ENCODE measurements at regions of chr5 and their contacts with region 1.

Region 1: DNA sequence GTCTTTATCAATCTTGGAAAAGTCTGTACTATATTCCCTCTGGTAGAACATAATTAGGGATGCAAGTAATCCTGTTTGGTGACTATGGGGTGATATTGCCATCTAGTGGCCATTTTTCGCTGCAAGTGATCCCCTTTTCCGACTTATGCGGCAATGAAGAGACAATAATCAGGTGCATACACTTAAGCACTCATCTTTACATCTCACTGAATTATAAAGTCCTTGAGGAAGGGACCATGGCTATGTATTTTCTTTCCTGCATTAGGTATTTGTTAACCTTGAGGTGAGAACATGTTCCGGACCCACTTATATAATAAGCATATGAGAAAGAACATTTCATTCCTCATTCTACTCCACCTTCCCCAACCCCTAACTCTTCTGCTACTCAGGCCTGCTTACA is 19.6 kb upstream of the LIX1 start:
- DNase-seq: peak; percentile 20
- H3K4me3 Mint-ChIP-seq: no peak overlapping the region
- H3K27ac Mint-ChIP-seq: no peak overlapping the region
- H3K4me1 Mint-ChIP-seq: no peaks in the 10 kb centered on the region
- H3K27me3 Mint-ChIP-seq: peaks cover 2% of the 10 kb centered on the region

Region 2: GRCh38 chr5:96614110-96614691 is 547.8 kb before region 1 on chr5:
- intact Hi-C with region 1: loop called (anchors 1 kb)
- DNase-seq: peak; percentile 16
- H3K4me3 Mint-ChIP-seq: no peak overlapping the region
- H3K27ac Mint-ChIP-seq: no peak overlapping the region
- H3K4me1 Mint-ChIP-seq: peaks cover 6% of the 10 kb centered on the region
- H3K27me3 Mint-ChIP-seq: peaks cover 43% of the 10 kb centered on the region

Region 3: DNA sequence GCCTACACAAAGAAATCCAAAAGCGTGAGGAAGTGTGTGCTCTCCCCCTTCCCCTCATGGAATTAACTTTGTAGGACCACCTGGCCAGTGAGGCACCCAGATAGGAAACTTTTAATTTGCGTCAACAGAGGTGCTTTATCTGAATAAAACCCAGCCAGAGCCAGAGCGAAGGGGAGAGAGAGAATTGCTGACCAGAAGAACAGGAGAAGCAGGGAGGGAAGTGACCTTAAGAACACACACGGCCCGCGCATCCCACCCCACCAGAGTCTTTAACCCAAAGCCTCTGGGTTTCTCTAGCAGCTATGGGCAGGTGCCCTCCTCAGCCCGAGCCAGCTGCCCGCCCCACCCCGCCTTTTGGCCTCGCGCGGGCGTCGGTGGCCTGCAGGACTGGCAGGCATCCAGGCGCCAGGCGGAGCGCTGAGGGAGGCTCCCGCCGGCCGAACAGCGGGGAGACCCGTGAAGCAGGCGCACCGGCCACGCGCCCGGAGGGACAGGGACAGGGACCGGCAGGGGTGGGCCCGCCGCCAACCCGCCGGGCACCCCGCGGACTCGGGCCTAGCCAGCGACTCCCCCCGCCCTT is 354.9 kb before region 1 on chr5:
- intact Hi-C with region 1: loop called (anchors 1 kb)
- DNase-seq: no peak
- H3K4me3 Mint-ChIP-seq: peak overlapping the region; percentile 99
- H3K27ac Mint-ChIP-seq: peak overlapping the region; percentile 95
- H3K4me1 Mint-ChIP-seq: peaks cover 81% of the 10 kb centered on the region
- H3K27me3 Mint-ChIP-seq: no peaks in the 10 kb centered on the region

Region 4: DNA sequence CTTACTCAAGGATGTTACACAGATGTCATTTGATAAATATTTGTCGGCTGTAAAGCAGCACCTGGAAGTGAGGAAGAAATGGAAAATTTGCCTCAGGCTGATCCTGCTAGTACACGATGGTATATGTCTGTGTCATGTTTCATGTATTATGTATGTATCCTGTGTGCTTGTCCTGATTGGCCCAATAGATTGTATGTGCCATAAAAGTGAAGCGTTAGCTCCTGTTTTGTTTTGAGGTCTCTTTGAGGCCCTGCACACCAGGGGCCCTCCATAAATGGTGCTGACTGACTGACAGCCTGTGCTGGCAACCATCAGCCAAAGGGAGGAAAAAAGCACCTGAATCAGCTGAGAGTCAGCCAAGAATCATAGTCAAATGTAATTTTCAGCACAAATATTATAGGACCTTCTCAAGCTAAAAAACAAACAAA is 238.0 kb before region 1 on chr5:
- intact Hi-C with region 1: no loop called
- DNase-seq: no peak
- H3K4me3 Mint-ChIP-seq: no peak overlapping the region
- H3K27ac Mint-ChIP-seq: peak overlapping the region; percentile 41
- H3K4me1 Mint-ChIP-seq: peaks cover 41% of the 10 kb centered on the region
- H3K27me3 Mint-ChIP-seq: no peaks in the 10 kb centered on the region

Region 5: DNA sequence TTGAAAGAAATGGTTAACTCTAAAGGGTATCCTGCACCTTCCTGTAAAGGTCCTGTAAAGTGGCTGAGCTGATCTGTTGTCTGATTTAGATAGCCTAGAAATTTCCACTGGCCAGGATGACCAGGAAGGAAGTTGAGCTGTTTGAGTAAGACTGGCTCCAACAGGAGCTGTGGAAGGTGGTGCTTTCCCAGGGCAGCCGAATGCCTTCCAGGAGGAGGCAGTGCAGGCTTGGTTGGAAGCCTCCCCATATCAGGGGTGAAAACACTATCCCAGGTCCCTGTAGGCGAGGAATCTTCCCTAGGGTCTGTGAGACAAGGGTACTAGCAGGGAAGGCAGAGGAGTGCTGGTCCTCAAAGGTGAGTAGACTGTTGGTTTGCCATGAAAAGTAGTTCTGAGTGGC is 118.0 kb before region 1 on chr5:
- intact Hi-C with region 1: loop called (anchors 5 kb)
- DNase-seq: no peak
- H3K4me3 Mint-ChIP-seq: no peak overlapping the region
- H3K27ac Mint-ChIP-seq: no peak overlapping the region
- H3K4me1 Mint-ChIP-seq: no peaks in the 10 kb centered on the region
- H3K27me3 Mint-ChIP-seq: peaks cover 4% of the 10 kb centered on the region

Region 6: GRCh38 chr5:97224112-97224750 is 62.2 kb after region 1 on chr5:
- intact Hi-C with region 1: no loop called
- DNase-seq: no peak
- H3K4me3 Mint-ChIP-seq: no peak overlapping the region
- H3K27ac Mint-ChIP-seq: no peak overlapping the region
- H3K4me1 Mint-ChIP-seq: no peaks in the 10 kb centered on the region
- H3K27me3 Mint-ChIP-seq: peaks cover 2% of the 10 kb centered on the region